GM12878 (cell line): ENCODE measurements at regions of chr5 and their contacts with region 1.

Region 1: GRCh38 chr5:90184764-90185163 is 224.8 kb downstream of the CETN3 start:
- DNase-seq: no peak
- ATAC-seq: no peak
- H3K4me3 ChIP-seq: no peak overlapping the region
- H3K27ac ChIP-seq: no peak overlapping the region
- H3K4me1 ChIP-seq: no peaks in the 10 kb centered on the region
- H3K27me3 ChIP-seq: no peaks in the 10 kb centered on the region
- CTCF ChIP-seq: no peak
- EP300 ChIP-seq: no peak
- POLR2A ChIP-seq: no peak
- RAD21 ChIP-seq: no peak

Region 2: DNA sequence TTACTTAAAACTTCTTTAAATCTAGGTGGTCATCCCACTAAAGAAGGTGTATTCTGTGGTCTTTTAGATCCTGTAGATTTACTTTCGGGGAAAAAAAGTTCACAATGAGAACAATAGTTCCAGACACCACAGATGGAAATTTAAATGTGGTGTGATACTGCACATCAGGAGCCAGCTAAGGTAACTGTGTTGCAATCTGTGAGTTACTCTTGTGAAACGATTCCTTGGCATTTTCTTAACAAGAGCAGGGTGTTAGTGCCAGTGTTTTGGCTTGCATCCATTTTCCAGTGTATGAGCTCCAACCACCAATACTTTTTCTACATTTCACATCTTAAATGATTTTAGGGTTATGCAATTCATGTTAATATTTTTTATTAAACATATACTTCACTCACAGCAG is 449.7 kb before region 1 on chr5:
- CTCF ChIA-PET with region 1: interaction called, 4 read pairs
- POLR2A ChIA-PET with region 1: no interaction called
- RAD21 ChIA-PET with region 1: no interaction called
- SMC1A ChIA-PET with region 1: no interaction called
- in situ Hi-C with region 1: no loop called
- intact Hi-C with region 1: loop called (anchors 10 kb)
- DNase-seq: no peak
- ATAC-seq: no peak
- H3K4me3 ChIP-seq: no peak overlapping the region
- H3K27ac ChIP-seq: no peak overlapping the region
- H3K4me1 ChIP-seq: no peaks in the 10 kb centered on the region
- H3K27me3 ChIP-seq: no peaks in the 10 kb centered on the region
- CTCF ChIP-seq: no peak
- EP300 ChIP-seq: no peak
- POLR2A ChIP-seq: no peak
- RAD21 ChIP-seq: no peak